PC-9 (cell line): ENCODE measurements at regions of chr16 and their contacts with region 1.

Region 1: DNA sequence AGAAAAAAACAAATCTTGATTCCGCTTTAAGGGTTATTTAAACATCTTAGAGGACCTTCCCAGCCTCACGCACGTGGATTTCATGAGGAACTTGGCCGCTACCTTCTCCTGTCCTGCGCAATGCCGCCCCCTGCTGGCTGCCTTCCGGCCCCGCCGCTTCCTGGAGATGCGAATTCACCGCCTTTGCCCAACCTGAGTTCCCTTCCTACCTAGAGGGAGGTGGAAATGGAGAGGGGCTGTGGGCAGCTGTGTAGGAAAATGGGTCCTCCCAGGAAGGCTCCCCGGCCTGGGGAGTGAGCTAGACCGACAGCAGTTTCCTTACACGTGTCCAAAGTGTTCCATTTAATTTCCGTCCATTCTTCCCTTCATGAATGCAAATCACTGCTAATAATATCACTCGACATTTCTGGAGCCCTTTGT is 1.0 kb upstream of the ABCC12 start:
- DNase-seq: peak; percentile 45 to 82
- H3K4me3 ChIP-seq: no peak overlapping the region
- H3K27ac ChIP-seq: peak overlapping the region; percentile 89
- H3K4me1 ChIP-seq: peaks cover 26% of the 10 kb centered on the region
- H3K27me3 ChIP-seq: no peaks in the 10 kb centered on the region
- CTCF ChIP-seq: peak; percentile 87

Region 2: GRCh38 chr16:47141773-47142485 is 1014.9 kb before region 1 on chr16:
- CTCF ChIA-PET with region 1: no interaction called
- POLR2A ChIA-PET with region 1: interaction called, 5 read pairs
- intact Hi-C with region 1: loop called (anchors 1 kb)
- DNase-seq: peak; percentile 83 to 86
- H3K4me3 ChIP-seq: peak overlapping the region; percentile 75
- H3K27ac ChIP-seq: peak overlapping the region; percentile 17; the same call in 1 of the 2 replicates
- H3K4me1 ChIP-seq: peaks cover 25% of the 10 kb centered on the region
- H3K27me3 ChIP-seq: no peaks in the 10 kb centered on the region
- CTCF ChIP-seq: peak; percentile 90

Region 3: GRCh38 chr16:47460711-47461597 is 695.8 kb before region 1 on chr16 and contains the starts of genes ITFG1 and PHKB:
- CTCF ChIA-PET with region 1: interaction called, 4 read pairs
- POLR2A ChIA-PET with region 1: no interaction called
- intact Hi-C with region 1: loop called (anchors 5 kb)
- DNase-seq: peak; percentile 80 to 91
- H3K4me3 ChIP-seq: peak within 1 kb of the TSS; percentile 75
- H3K27ac ChIP-seq: peak within 1 kb of the TSS; percentile 94
- H3K4me1 ChIP-seq: peaks cover 27% of the 10 kb centered on the region
- H3K27me3 ChIP-seq: no peaks in the 10 kb centered on the region
- CTCF ChIP-seq: no peak
- total RNA-seq, gene ITFG1: 27.7 and 33.0 TPM in 2 replicates
- total RNA-seq, gene PHKB: 65.5 and 81.3 TPM in 2 replicates

Region 4: DNA sequence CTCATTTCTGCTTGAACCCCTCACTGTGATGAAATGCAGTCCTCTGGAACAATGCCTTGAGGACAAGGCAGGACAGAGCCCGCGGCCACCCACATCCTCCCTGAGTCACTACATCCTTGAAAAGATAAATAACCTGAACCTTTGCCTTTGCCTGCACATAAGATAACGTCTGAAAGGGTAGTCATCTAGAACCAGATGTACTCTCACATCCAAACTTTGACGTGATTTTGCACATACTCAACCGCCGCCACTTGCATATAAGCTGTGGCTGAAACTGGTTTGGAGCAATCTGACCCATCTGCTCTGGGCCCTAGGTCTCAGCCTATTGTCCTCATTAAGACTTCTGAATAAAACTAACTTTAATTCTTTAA is 443.6 kb before region 1 on chr16:
- CTCF ChIA-PET with region 1: no interaction called
- POLR2A ChIA-PET with region 1: no interaction called
- intact Hi-C with region 1: loop called (anchors 10 kb)
- DNase-seq: peak; percentile 31 to 64
- H3K4me3 ChIP-seq: no peak overlapping the region
- H3K27ac ChIP-seq: no peak overlapping the region
- H3K4me1 ChIP-seq: peaks cover 44% of the 10 kb centered on the region
- H3K27me3 ChIP-seq: no peaks in the 10 kb centered on the region
- CTCF ChIP-seq: no peak

Region 5: DNA sequence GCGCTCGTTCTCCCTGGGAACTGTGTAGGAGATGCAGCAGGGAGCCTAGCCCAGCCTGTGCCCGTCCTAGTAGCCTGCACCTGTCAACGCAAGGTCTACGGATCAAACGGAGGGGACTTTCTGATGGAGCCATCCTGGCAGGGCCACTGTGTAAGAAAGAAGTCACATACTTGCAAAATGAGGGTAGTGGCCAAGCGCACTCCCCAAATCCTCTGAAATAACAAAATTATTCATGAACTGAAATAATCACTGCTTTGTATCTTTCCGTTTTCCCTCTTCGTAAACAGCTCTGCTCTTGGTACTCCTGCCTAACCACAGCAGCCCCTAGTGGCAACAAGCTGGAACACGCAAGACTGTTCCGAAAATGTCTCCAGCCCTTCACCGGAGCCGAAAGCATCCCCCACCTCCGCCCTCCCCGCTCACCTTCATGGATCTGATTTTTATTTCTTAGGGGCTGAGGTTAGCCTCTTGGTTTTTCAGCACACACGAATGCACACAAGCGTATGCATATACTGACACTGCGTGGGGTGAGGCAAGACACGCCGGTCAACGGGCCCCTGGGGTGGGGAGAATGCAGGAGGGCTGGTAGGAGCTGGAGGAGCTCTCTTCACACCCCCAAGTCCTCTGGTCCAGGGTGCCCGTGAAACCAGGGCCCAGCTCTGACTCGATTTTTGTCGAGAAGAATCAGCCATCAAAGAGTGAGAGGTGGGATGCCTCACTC is 101.8 kb before region 1 on chr16:
- CTCF ChIA-PET with region 1: no interaction called
- POLR2A ChIA-PET with region 1: no interaction called
- intact Hi-C with region 1: loop called (anchors 5 kb)
- DNase-seq: peak in 1 of 2 experiments; percentile 46
- H3K4me3 ChIP-seq: no peak overlapping the region
- H3K27ac ChIP-seq: no peak overlapping the region
- H3K4me1 ChIP-seq: peaks cover 19% of the 10 kb centered on the region
- H3K27me3 ChIP-seq: no peaks in the 10 kb centered on the region
- CTCF ChIP-seq: peak; percentile 77